ENCODE measurements at regions of chr9 and their contacts with region 1.

Region 1: DNA sequence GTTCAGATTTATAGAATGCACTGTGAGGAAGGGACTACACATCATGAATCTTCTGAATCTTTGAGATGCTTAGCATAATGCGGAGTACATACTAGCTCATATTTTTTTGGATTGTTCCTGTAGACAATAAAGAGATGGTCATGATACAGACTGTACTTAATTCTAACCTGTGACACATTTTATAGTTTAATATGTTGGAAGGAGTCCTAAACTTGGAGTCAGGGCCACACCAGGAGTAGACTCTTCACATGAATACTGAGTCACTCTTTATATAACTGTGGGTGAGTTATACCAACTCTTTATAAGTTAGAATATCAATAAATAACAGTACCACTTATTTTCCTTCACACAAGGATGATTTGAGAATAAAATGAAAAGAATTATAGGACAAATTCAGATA is 16.9 kb downstream of the C9orf85 start:
- DNase-seq: no peak
- CTCF ChIP-seq: no peak

Region 2: DNA sequence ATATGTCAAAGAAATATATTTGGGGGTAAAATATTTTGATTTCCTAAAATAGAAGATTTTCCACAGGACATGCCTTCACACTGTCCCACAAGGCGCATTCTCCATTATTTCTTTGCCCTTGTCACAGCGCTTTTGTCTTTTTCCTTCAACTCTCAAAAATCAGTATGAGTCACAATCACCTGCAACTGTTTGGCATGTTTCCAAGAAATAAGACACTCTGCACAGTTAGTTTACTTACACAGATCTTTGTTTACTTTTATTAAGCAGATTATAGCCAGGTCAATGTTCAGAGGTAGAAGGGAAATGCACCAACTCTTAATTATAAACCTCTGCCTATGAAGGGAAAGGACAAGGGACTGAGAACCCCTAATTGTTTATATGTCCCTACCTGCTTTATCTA is 169.6 kb before region 1 on chr9:
- CTCF ChIA-PET with region 1: no interaction called
- POLR2A ChIA-PET with region 1: no interaction called
- DNase-seq: no peak
- CTCF ChIP-seq: no peak

Region 3: GRCh38 chr9:71847892-71848291 is 80.5 kb before region 1 on chr9:
- CTCF ChIA-PET with region 1: no interaction called
- POLR2A ChIA-PET with region 1: no interaction called
- DNase-seq: no peak
- CTCF ChIP-seq: no peak

Region 4: DNA sequence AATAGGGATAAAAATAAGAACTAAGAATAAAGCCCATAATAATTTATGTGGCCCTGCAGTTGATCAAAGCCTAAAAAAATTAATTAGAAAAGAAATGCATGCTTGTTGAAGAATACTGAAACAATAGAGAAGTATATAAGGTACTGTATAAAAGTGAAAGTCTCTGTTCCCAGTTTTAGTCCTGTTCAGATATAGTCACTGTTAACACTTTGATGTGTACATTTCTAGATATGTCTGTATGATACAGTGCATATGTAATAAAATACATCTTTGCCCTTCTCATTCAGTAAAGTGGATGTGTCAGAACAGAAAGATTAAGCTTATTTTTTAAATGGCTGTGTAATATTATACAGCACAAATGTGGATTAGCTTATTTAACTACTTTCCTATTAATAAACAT is 12.9 kb before region 1 on chr9:
- CTCF ChIA-PET with region 1: interaction called, 14 read pairs
- POLR2A ChIA-PET with region 1: interaction called, 3 read pairs
- DNase-seq: no peak
- CTCF ChIP-seq: no peak

Measured in GM10248 (cell line).